Sciatic nerve (tissue), 2 donors: ENCODE measurements at regions of chr6 and their contacts with region 1.

Region 1: DNA sequence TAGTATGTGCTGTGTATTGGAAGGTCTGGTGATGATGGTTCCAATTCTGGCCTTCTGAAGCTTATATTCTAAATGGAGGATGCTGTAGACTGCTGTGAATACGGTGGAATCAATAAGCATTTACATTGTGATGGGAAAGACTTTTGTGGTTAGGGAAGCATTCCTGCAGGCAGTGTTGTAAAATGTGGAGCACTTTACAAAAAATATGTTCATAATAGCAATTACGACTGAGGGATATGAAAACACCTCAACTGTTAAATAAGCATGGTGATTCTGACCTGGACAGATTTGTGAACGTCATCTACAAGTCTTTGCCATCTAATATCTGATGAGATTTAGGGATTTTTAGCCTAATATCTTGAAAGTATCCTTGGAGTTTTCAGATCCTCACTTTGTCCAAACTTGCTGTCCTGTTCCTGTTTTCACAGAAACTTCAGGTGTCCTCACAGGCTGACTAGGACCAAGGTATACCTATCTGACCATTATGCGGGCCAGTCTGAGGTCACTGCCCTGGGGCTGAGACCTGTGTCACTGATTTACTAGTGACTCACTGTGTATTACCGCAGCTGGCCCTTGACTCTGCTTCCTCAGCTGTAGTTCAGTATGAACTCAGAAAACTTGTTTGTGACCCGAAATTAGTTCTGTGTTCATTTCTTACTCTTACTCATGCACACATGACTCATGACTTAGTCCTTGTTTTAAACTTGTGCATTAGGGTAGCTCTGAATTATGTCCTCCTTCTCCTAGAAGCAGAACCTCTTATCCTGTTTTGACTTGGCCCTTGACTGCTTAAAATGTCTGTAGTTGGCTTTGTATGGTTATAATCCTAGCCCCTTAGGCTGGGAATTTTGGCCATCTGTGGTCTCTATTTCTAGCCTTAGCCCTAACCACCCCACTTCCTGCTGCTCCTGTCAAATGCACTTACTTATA is 343.0 kb downstream of the CDKAL1 start:
- DNase-seq: no peak
- ATAC-seq: peak; percentile 51

Region 2: GRCh38 chr6:20805021-20805420 is 72.3 kb before region 1 on chr6:
- intact Hi-C with region 1: no loop called
- DNase-seq: no peak
- ATAC-seq: no peak

Region 3: GRCh38 chr6:21033575-21034026 is 156.3 kb after region 1 on chr6:
- intact Hi-C with region 1: no loop called
- DNase-seq: peak; percentile 64
- ATAC-seq: peak; percentile 96

Region 4: GRCh38 chr6:22737331-22737730 is 1860.1 kb after region 1 on chr6:
- intact Hi-C with region 1: loop called (anchors 5 kb)
- DNase-seq: peak; percentile 68
- ATAC-seq: peak; percentile 72